IMR-90 (cell line): ENCODE measurements at regions of chr4 and their contacts with region 1.

Region 1: DNA sequence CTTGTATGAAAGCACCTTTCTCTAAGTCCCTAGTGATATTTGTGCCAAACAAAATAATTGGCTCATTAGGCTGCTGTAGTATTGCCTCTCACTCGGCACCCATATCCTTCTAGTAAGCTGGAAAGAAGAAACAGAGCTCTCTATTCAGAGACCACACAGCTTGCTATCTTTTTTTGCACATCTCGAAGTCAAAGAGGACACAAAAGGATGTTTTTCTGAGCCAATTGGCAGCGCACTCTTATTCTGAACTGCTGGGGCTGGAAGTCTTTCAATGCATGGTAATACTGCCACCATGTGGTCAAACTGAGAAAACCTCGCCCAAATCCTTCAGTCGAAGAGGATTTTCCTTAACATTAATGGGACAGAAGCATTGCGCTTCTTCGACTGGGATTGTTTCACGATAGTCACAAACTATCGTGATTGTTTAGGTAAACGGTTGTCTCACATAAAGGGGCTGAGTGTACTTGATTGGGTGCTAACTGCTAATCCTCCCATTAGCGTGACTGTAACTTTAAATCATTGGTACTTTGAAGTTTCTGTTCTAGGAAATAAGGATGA is 572.0 kb upstream of the LCORL start:
- DNase-seq: peak; percentile 74
- ATAC-seq: peak; percentile 89
- H3K4me3 ChIP-seq: peak overlapping the region; percentile 9; the same call in 1 of the 2 replicates
- H3K27ac ChIP-seq: no peak overlapping the region
- H3K4me1 ChIP-seq: no peaks in the 10 kb centered on the region
- H3K27me3 ChIP-seq: peaks cover 1% of the 10 kb centered on the region; the same call in 1 of the 2 replicates
- CTCF ChIP-seq: peak; percentile 85
- POLR2A ChIP-seq: no peak
- RAD21 ChIP-seq: peak; percentile 89

Region 2: DNA sequence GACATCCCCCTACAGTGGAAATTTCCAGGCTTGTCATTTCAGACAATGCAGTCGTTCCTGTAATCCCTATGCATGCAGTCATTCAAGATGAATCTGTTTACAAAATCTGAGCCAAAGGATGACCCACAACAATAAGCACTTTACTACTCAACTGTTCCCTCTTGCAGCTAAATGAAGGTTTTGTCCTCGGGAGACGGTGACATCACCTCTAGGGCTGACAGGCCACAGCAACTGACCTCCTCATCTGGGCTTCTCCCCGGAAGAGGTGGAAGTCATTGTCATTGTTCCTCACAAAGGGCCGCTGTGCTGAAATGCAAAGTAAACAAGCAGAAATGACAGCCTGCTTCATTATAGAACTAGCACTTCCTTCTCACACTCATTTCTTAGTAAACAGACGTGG is 1049.3 kb before region 1 on chr4:
- CTCF ChIA-PET with region 1: no interaction called
- POLR2A ChIA-PET with region 1: no interaction called
- dilution Hi-C with region 1: no loop called
- in situ Hi-C with region 1: loop called (anchors 5 kb)
- intact Hi-C with region 1: loop called (anchors 1 kb)
- DNase-seq: no peak
- ATAC-seq: no peak; the same call in 1 of the 2 replicates
- H3K4me3 ChIP-seq: no peak overlapping the region
- H3K27ac ChIP-seq: no peak overlapping the region
- H3K4me1 ChIP-seq: peaks cover 1% of the 10 kb centered on the region; the same call in 1 of the 2 replicates
- H3K27me3 ChIP-seq: no peaks in the 10 kb centered on the region; the same call in 1 of the 2 replicates
- CTCF ChIP-seq: no peak
- POLR2A ChIP-seq: no peak
- RAD21 ChIP-seq: no peak

Region 3: DNA sequence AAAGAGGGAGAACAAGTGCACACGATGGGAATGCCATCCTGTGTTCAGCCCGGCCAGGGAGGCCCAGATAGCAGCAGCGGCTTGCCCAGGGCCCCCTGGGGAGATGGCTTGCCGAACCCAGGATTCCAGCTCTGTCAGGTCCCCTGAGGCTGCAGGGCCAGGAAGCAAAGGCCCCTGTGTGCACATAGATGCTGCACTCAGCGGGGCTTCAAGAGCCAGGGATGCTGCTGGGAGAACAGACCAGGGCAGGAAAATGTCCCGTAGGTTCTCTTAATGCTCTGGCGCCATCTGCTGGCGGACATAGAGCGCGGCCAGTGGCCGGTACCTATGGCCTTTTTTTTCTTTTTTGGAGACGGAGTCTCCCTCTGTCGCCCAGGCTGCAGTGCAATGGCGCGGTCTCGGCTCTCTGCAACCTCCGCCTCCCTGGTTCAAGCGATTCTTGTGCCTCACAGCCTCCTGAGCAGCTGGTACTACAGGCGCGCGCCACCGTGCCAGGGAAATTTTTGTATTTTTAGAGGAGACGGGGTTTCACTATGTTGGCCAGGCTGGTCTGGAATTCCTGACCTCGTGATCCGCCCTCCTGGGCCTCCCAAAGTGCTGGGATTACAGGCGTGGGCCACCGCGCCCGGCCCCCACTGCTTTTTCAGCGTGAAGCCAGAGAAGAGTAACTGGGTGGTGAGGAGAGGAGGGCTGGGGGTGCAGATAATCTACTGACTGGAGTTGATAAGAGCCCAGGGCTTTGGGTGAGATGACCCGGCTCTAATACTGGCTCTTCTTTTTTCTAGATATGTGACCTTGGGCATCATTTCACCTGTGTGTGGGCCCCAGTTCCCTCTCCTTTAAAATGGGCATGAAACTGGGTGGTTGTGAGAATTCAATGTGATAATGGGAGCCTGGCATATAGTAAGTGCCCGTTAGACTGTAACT is 956.6 kb before region 1 on chr4:
- CTCF ChIA-PET with region 1: no interaction called
- POLR2A ChIA-PET with region 1: no interaction called
- dilution Hi-C with region 1: no loop called
- in situ Hi-C with region 1: loop called (anchors 25 kb)
- intact Hi-C with region 1: loop called (anchors 1 kb)
- DNase-seq: peak; percentile 69
- ATAC-seq: peak; percentile 96
- H3K4me3 ChIP-seq: no peak overlapping the region
- H3K27ac ChIP-seq: no peak overlapping the region
- H3K4me1 ChIP-seq: no peaks in the 10 kb centered on the region
- H3K27me3 ChIP-seq: no peaks in the 10 kb centered on the region
- CTCF ChIP-seq: peak; percentile 86
- POLR2A ChIP-seq: no peak
- RAD21 ChIP-seq: peak; percentile 79

Region 4: GRCh38 chr4:17817020-17817419 is 776.5 kb before region 1 on chr4:
- CTCF ChIA-PET with region 1: interaction called, 3 read pairs
- POLR2A ChIA-PET with region 1: no interaction called
- dilution Hi-C with region 1: no loop called
- in situ Hi-C with region 1: loop called (anchors 10 kb)
- intact Hi-C with region 1: loop called (anchors 2 kb)
- DNase-seq: peak; percentile 78
- ATAC-seq: peak; percentile 89
- H3K4me3 ChIP-seq: no peak overlapping the region
- H3K27ac ChIP-seq: no peak overlapping the region
- H3K4me1 ChIP-seq: no peaks in the 10 kb centered on the region
- H3K27me3 ChIP-seq: no peaks in the 10 kb centered on the region
- CTCF ChIP-seq: peak; percentile 70
- POLR2A ChIP-seq: no peak
- RAD21 ChIP-seq: peak; percentile 70

Region 5: DNA sequence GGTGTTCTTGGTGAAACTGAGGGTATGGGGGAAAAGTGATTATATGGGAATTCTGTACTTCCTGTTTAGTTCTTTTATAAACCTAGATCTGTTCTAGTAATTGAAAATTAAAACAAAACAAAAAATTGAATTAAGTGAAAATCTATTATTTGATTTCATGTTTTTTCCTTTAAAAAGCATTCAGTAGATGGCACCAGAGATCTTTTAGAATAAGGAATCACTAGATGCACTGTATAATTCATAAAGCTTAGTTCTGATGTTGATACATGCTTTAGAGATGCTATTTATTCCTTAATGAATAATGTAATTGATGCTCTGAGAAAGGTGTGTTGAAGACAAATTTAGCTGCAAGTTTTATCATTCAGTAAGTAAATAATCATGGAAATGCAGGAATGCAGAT is 659.2 kb before region 1 on chr4:
- CTCF ChIA-PET with region 1: no interaction called
- POLR2A ChIA-PET with region 1: no interaction called
- dilution Hi-C with region 1: no loop called
- in situ Hi-C with region 1: loop called (anchors 10 kb)
- intact Hi-C with region 1: loop called (anchors 1 kb)
- DNase-seq: peak; percentile 14
- ATAC-seq: no peak
- H3K4me3 ChIP-seq: no peak overlapping the region
- H3K27ac ChIP-seq: no peak overlapping the region
- H3K4me1 ChIP-seq: no peaks in the 10 kb centered on the region
- H3K27me3 ChIP-seq: no peaks in the 10 kb centered on the region
- CTCF ChIP-seq: peak; percentile 52
- POLR2A ChIP-seq: no peak
- RAD21 ChIP-seq: peak; percentile 54